HAP-1 (cell line): ENCODE measurements at regions of chrX and their contacts with region 1.

Region 1: GRCh38 chrX:41350150-41350975 is 16.4 kb downstream of the DDX3X start:
- DNase-seq: no peak
- H3K4me3 ChIP-seq: no peak overlapping the region
- H3K4me1 ChIP-seq: no peaks in the 10 kb centered on the region
- H3K27me3 ChIP-seq: no peaks in the 10 kb centered on the region

Region 2: GRCh38 chrX:41441934-41442823 is 91.8 kb after region 1 on chrX:
- in situ Hi-C with region 1: loop called (anchors 5 kb)
- DNase-seq: peak; percentile 81 to 91
- H3K4me3 ChIP-seq: peak overlapping the region; percentile 28
- H3K4me1 ChIP-seq: peaks cover 24% of the 10 kb centered on the region
- H3K27me3 ChIP-seq: no peaks in the 10 kb centered on the region